OCI-LY7 (cell line): ENCODE measurements at regions of chr7 and their contacts with region 1.

Region 1: DNA sequence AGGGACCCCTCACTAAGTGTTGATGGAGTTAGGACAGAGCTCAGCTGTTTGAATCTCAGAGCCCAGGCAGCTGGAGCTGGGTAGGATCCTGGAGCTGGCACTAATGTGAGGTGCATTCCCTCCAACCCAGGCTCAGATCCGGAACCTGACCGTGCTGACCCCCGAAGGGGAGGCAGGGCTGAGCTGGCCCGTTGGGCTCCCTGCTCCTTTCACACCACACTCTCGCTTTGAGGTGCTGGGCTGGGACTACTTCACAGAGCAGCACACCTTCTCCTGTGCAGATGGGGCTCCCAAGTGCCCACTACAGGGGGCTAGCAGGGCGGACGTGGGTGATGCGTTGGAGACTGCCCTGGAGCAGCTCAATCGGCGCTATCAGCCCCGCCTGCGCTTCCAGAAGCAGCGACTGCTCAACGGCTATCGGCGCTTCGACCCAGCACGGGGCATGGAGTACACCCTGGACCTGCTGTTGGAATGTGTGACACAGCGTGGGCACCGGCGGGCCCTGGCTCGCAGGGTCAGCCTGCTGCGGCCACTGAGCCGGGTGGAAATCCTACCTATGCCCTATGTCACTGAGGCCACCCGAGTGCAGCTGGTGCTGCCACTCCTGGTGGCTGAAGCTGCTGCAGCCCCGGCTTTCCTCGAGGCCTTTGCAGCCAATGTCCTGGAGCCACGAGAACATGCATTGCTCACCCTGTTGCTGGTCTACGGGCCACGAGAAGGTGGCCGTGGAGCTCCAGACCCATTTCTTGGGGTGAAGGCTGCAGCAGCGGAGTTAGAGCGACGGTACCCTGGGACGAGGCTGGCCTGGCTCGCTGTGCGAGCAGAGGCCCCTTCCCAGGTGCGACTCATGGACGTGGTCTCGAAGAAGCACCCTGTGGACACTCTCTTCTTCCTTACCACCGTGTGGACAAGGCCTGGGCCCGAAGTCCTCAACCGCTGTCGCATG is 5.2 kb downstream of the CHPF2 start:
- DNase-seq: no peak
- H3K4me3 ChIP-seq: no peak overlapping the region
- H3K27ac ChIP-seq: no peak overlapping the region
- H3K4me1 ChIP-seq: peaks cover 24% of the 10 kb centered on the region
- CTCF ChIP-seq: no peak

Region 2: GRCh38 chr7:151172273-151173141 is 65.0 kb before region 1 on chr7:
- CTCF ChIA-PET with region 1: no interaction called
- POLR2A ChIA-PET with region 1: no interaction called
- intact Hi-C with region 1: no loop called
- DNase-seq: peak; percentile 72
- H3K4me3 ChIP-seq: no peak overlapping the region
- H3K27ac ChIP-seq: no peak overlapping the region
- H3K4me1 ChIP-seq: no peaks in the 10 kb centered on the region
- CTCF ChIP-seq: peak; percentile 100

Region 3: DNA sequence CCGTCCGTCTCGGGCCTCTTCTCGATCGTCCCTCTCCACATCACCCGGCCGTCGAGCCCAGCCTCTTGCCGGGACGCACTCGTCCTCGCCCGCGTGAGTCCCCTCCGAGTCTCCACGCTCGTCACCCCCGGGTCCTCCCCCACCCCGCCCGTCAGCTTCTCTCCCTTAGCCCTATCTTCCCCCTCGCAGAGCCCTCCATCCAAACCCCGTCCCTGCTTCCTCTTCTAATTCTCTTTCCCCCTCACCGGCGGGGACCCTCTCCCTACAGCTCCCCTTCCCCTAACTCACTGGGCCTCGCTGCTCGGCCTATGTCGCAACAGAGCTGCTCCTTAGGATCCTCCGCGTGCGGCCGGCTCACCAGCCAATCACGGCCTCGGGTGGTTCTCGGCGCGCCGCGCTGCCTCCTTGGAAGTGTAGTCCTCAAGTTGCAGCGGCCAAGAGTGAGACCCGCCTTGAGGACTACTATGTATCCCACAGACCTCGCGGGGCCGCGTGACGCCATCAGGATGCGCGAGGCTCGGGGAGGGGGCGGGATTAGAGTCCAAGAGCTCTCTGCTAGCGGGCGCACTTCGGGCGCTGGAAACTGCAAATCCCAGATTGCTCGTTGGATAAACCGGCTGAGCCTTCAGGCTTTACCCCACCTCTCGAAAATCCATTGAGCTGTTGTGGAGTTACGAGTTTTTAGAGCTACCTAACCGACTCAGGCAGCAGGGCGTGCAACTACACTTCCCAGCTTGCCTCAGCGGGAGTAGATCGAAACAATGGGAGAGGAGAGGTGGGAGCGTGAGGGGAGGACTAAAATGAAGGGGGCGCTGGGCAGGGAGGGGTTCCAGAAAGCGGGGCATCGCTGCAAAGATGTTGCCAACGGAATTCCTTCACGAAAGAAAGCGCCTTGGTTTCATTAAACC is 10.4 kb before region 1 on chr7 and contains the start of gene ABCF2:
- CTCF ChIA-PET with region 1: interaction called, 3 read pairs
- POLR2A ChIA-PET with region 1: interaction called, 14 read pairs
- intact Hi-C with region 1: no loop called
- DNase-seq: peak; percentile 98
- H3K4me3 ChIP-seq: peak within 1 kb of the TSS; percentile 94
- H3K27ac ChIP-seq: peak within 1 kb of the TSS; percentile 8
- H3K4me1 ChIP-seq: peaks cover 32% of the 10 kb centered on the region
- CTCF ChIP-seq: peak; percentile 34; the same call in 1 of the 2 replicates
- total RNA-seq, gene ABCF2: 30.7 and 31.8 TPM in 2 replicates

Region 4: GRCh38 chr7:152307902-152308301 is 1070.4 kb after region 1 on chr7:
- CTCF ChIA-PET with region 1: no interaction called
- POLR2A ChIA-PET with region 1: no interaction called
- intact Hi-C with region 1: no loop called
- DNase-seq: no peak
- H3K4me3 ChIP-seq: no peak overlapping the region
- H3K27ac ChIP-seq: no peak overlapping the region
- H3K4me1 ChIP-seq: peaks cover 12% of the 10 kb centered on the region
- CTCF ChIP-seq: no peak